ENCODE measurements at regions of chr1 and their contacts with region 1.

Region 1: GRCh38 chr1:167605576-167605975 is 24.5 kb upstream of the RCSD1 start:
- DNase-seq: peak; percentile 66
- H3K4me3 ChIP-seq: no peak overlapping the region
- H3K27ac ChIP-seq: no peak overlapping the region
- H3K4me1 ChIP-seq: peaks cover 11% of the 10 kb centered on the region
- H3K27me3 ChIP-seq: no peaks in the 10 kb centered on the region
- CTCF ChIP-seq: no peak

Region 2: GRCh38 chr1:167564612-167565270 is 40.8 kb before region 1 on chr1:
- CTCF ChIA-PET with region 1: no interaction called
- dilution Hi-C with region 1: loop called (anchors 5 kb)
- in situ Hi-C with region 1: no loop called
- intact Hi-C with region 1: no loop called
- DNase-seq: peak; percentile 51
- H3K4me3 ChIP-seq: no peak overlapping the region
- H3K27ac ChIP-seq: peak overlapping the region; percentile 46
- H3K4me1 ChIP-seq: peaks cover 60% of the 10 kb centered on the region
- H3K27me3 ChIP-seq: no peaks in the 10 kb centered on the region
- CTCF ChIP-seq: peak in 1 of 2 donors; percentile 16